ENCODE measurements at regions of chr10 and their contacts with region 1.

Region 1: GRCh38 chr10:73879296-73880173 is 5.2 kb upstream of the CAMK2G start:
- DNase-seq: peak; percentile 81 to 93
- ATAC-seq: peak; percentile 92

Region 2: GRCh38 chr10:73772280-73773151 is 107.0 kb before region 1 on chr10:
- intact Hi-C with region 1: no loop called
- DNase-seq: peak; percentile 88
- ATAC-seq: peak; percentile 79

Region 3: DNA sequence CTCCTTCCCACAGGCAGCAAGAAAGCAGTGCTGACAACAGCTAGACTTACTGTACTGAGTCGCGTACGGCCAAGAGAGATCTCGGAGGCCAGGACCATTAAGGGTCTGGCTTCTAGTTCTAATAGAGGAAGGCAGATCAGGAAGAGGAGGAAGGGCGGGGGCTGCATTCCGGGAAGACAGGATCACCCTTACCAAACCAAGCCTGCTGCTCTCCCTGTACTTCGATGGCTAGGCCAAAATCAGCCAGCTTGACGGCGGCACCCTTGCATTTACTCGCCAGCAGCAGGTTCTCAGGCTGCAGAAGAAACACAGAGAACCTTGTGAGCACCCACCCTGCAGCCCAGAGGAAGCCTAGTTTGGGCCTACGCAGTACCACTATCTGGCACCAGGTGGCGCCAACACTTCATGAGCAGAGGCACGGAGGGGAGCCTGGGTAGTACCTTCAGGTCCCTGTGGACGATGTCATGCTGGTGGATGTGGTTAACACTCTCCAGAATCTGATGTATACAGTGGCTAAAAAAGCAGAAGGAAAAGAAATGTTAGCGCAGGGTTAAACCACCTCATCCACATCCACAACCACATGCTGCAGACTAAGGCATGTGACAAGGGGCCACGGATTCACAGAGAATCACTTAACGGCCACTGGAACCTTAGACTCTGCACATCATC is 30.6 kb before region 1 on chr10:
- intact Hi-C with region 1: loop called in 1 of 2 experiments (anchors 5 kb)
- DNase-seq: peak; percentile 72 to 90
- ATAC-seq: peak; percentile 80

Region 4: GRCh38 chr10:74096777-74097176 is 217.2 kb after region 1 on chr10:
- intact Hi-C with region 1: loop called in 1 of 2 experiments (anchors 10 kb)
- DNase-seq: no peak
- ATAC-seq: no peak

Measured in left colon (tissue), 2 donors.